ENCODE measurements at regions of chr2 and their contacts with region 1.

Region 1: DNA sequence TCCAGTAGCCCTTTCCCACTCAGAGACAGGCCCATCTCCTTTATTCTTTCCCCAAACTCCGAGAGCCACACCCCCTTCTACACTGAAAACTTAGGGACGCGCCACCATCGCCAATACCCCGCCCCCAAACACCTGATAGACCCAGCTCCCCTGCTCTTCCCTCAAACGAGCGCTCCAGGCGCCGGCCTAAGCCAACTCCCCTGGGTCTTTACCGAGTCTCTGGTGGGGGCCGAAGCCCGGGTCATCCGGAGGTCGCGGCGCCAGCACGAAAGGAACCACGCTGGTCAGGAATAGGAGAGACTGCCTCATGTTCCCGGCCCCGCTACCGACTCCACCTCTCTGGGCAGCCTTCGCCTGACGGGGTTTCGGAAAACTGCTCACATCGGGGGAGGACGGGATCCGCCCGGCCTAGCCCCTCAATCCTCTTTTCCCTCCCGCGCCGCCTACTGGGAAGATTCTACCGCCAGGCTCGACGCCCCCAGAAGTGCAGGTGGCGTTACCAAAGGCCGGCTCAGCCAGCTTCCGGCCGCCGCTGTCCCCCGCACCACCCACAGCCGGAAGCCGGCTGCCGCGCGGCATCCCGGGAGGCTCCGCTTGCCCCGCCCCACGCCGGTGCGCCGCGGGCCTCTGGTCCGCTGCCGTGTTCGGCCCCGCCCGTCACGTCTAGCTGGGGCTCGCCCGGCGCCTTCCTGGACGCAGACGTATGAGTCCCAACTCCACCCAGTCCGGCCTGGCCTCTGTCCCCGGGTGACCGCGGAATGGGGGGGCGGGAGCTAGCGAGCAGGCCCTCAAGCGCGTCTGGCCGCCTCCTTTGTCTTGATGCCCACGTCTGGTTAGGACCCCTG is at the start of gene ADAM17:
- DNase-seq: peak; percentile 98
- H3K4me3 ChIP-seq: peak within 1 kb of the TSS; percentile 60 to 98 (median 94)
- H3K27ac ChIP-seq: peak within 1 kb of the TSS; percentile 89
- H3K4me1 ChIP-seq: peaks cover 31% of the 10 kb centered on the region
- H3K27me3 ChIP-seq: no peaks in the 10 kb centered on the region
- CTCF ChIP-seq: peak; percentile 27 to 47
- total RNA-seq, gene ADAM17: 39.5 to 74.3 TPM

Region 2: GRCh38 chr2:8039732-8040131 is 1515.8 kb before region 1 on chr2:
- CTCF ChIA-PET with region 1: no interaction called
- dilution Hi-C with region 1: no loop called
- in situ Hi-C with region 1: no loop called
- intact Hi-C with region 1: no loop called
- DNase-seq: no peak
- H3K4me3 ChIP-seq: no peak overlapping the region
- H3K27ac ChIP-seq: no peak overlapping the region
- H3K4me1 ChIP-seq: no peaks in the 10 kb centered on the region
- H3K27me3 ChIP-seq: no peaks in the 10 kb centered on the region
- CTCF ChIP-seq: no peak

Region 3: GRCh38 chr2:9532421-9532820 is 23.1 kb before region 1 on chr2:
- CTCF ChIA-PET with region 1: interaction called, 16 read pairs
- dilution Hi-C with region 1: no loop called
- in situ Hi-C with region 1: no loop called
- intact Hi-C with region 1: no loop called
- DNase-seq: no peak
- H3K4me3 ChIP-seq: no peak overlapping the region
- H3K27ac ChIP-seq: peak overlapping the region; percentile 32
- H3K4me1 ChIP-seq: peaks cover 13% of the 10 kb centered on the region
- H3K27me3 ChIP-seq: no peaks in the 10 kb centered on the region
- CTCF ChIP-seq: no peak

Region 4: DNA sequence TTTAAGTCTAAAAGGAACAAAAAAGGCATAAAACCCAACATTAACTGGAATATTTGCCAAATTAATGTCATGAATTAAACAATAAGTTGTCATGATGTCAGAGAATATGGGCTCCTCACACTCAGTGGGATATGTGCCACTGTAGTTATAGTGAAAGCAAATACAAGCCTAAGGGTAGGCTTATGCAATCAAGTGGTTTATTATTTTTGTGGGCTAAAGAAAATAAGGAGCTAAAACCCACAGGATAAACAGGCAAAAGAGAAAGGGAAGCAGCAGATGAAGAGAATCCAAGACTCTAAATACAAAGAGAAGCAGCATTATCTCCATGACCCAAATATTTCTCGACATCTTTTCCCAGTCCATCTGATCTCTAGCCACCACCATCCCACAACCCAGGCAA is 57.8 kb after region 1 on chr2:
- CTCF ChIA-PET with region 1: no interaction called
- dilution Hi-C with region 1: no loop called
- in situ Hi-C with region 1: no loop called
- intact Hi-C with region 1: loop called (anchors 5 kb)
- DNase-seq: peak; percentile 82
- H3K4me3 ChIP-seq: no peak overlapping the region
- H3K27ac ChIP-seq: no peak overlapping the region
- H3K4me1 ChIP-seq: peaks cover 21% of the 10 kb centered on the region
- H3K27me3 ChIP-seq: no peaks in the 10 kb centered on the region
- CTCF ChIP-seq: no peak

Region 5: DNA sequence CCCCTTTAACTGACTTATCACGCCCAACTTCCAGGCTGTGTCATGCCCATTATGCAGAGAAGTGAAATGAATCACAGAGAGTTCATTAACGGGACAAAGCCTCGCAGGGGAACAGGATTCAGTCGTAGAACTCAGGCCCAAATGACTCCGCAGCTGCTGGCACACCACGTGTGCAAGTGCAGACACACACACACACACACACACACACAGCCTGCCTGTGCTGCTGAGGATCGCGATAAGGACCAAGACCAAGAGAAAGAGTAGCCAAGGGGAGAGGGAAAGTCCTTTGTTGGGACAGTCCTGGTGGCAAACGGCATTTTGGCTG is 197.7 kb after region 1 on chr2:
- CTCF ChIA-PET with region 1: no interaction called
- dilution Hi-C with region 1: no loop called
- in situ Hi-C with region 1: no loop called
- intact Hi-C with region 1: loop called (anchors 1 kb)
- DNase-seq: peak; percentile 98
- H3K4me3 ChIP-seq: peak overlapping the region; percentile 35 to 53 (median 45)
- H3K27ac ChIP-seq: peak overlapping the region; percentile 98
- H3K4me1 ChIP-seq: peaks cover 42% of the 10 kb centered on the region
- H3K27me3 ChIP-seq: no peaks in the 10 kb centered on the region
- CTCF ChIP-seq: no peak

Region 6: DNA sequence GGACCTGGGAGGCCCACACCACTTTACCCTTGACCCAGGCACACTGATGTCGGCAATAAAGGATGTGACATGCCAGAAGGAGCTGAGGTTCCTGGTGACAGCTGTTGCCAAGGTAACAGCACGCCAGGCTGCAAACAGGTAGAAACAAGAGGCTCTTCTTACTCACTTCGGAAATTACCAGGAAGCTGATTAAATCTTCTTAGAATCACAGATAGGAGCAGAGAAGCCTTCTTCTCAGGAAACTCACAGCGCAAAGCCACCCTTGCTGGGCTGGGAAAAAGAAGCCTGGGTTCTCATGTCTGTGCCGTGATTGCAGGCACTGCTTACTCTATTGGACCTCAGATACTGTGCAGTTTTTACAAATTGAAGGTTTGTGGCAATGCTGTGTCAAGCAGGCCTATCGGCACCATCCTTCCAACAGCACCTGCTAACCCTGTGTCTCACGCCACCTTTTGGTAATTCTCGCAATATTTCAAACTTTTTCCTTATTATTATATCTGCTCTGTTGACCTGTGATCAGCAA is 226.7 kb after region 1 on chr2:
- CTCF ChIA-PET with region 1: no interaction called
- dilution Hi-C with region 1: no loop called
- in situ Hi-C with region 1: no loop called
- intact Hi-C with region 1: loop called (anchors 5 kb)
- DNase-seq: peak; percentile 88
- H3K4me3 ChIP-seq: no peak overlapping the region
- H3K27ac ChIP-seq: peak overlapping the region; percentile 79
- H3K4me1 ChIP-seq: peaks cover 28% of the 10 kb centered on the region
- H3K27me3 ChIP-seq: no peaks in the 10 kb centered on the region
- CTCF ChIP-seq: no peak

Region 7: GRCh38 chr2:10048501-10049171 is 493.1 kb after region 1 on chr2:
- CTCF ChIA-PET with region 1: no interaction called
- dilution Hi-C with region 1: no loop called
- in situ Hi-C with region 1: no loop called
- intact Hi-C with region 1: no loop called
- DNase-seq: peak; percentile 32
- H3K4me3 ChIP-seq: no peak overlapping the region
- H3K27ac ChIP-seq: no peak overlapping the region
- H3K4me1 ChIP-seq: peaks cover 4% of the 10 kb centered on the region
- H3K27me3 ChIP-seq: no peaks in the 10 kb centered on the region
- CTCF ChIP-seq: peak; percentile 59 to 63

Region 8: GRCh38 chr2:10267551-10268465 is 712.3 kb after region 1 on chr2:
- CTCF ChIA-PET with region 1: no interaction called
- dilution Hi-C with region 1: no loop called
- in situ Hi-C with region 1: no loop called
- intact Hi-C with region 1: no loop called
- DNase-seq: no peak
- H3K4me3 ChIP-seq: no peak overlapping the region
- H3K27ac ChIP-seq: no peak overlapping the region
- H3K4me1 ChIP-seq: peaks cover 9% of the 10 kb centered on the region
- H3K27me3 ChIP-seq: no peaks in the 10 kb centered on the region
- CTCF ChIP-seq: no peak